ENCODE measurements at regions of chr3 and their contacts with region 1.

Region 1: GRCh38 chr3:115169808-115170207 is 22.7 kb upstream of the ZBTB20 start:
- DNase-seq: no peak
- H3K4me3 Mint-ChIP-seq: no peak overlapping the region
- H3K27ac Mint-ChIP-seq: no peak overlapping the region
- H3K4me1 Mint-ChIP-seq: peaks cover 12% of the 10 kb centered on the region
- H3K27me3 Mint-ChIP-seq: no peaks in the 10 kb centered on the region

Region 2: GRCh38 chr3:115092220-115092791 is 77.5 kb before region 1 on chr3:
- CTCF ChIA-PET with region 1: interaction called, 14 read pairs
- POLR2A ChIA-PET with region 1: interaction called, 5 read pairs
- DNase-seq: peak; percentile 61
- H3K4me3 Mint-ChIP-seq: no peak overlapping the region
- H3K27ac Mint-ChIP-seq: no peak overlapping the region
- H3K4me1 Mint-ChIP-seq: no peaks in the 10 kb centered on the region
- H3K27me3 Mint-ChIP-seq: no peaks in the 10 kb centered on the region

Region 3: DNA sequence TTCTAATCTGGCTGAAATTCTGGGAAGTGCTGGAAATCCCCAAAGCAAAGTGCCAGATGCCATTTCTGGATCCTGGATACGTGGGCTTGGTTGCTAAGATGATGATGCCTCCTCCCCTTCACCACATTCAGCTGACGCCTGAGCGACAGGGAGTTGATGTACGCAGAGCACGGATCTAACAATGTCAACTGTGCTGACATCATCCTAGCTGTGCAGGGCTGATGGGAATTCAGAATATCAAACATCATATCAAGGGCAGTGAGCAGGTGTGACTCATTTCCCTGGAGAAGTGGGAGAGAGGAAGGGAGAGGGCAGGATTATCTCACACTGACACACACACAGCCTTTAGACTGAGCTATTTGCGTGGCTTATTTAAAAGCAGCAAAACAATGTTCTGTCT is 69.9 kb after region 1 on chr3:
- CTCF ChIA-PET with region 1: no interaction called
- POLR2A ChIA-PET with region 1: no interaction called
- DNase-seq: no peak
- H3K4me3 Mint-ChIP-seq: no peak overlapping the region
- H3K27ac Mint-ChIP-seq: no peak overlapping the region
- H3K4me1 Mint-ChIP-seq: no peaks in the 10 kb centered on the region
- H3K27me3 Mint-ChIP-seq: no peaks in the 10 kb centered on the region

Measured in activated CD4-positive, alpha-beta memory T cell treated with anti-CD3 and anti-CD28 coated beads, Interleukin-2, amount 10 ng/mL, durations not matched to agents 7 days and 5 days (primary cell).